Right cardiac atrium (tissue), 5 donors: ENCODE measurements at regions of chr9 and their contacts with region 1.

Region 1: DNA sequence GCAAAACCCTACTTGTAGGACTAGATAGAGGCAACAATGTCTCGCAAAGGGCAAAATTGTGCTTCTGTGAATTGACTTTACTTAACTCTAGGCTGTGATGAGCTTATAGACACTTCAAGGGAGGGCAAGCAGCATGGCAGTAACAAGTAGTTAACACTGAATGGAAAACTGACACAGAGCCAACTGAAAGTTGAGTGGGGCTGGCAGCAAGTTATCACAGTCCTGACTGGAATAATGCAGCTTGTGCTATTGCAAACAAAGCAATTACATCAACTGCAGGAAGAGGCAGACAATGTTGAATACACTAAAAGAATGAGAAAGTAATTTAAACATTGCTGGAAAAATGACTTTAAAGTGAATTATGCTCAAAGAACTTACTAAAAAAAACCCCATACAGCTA is 62.2 kb downstream of the RNF38 start:
- DNase-seq: peak in 1 of 3 donors; percentile 28
- ATAC-seq: peak; percentile 89 to 94
- H3K4me3 ChIP-seq: no peak overlapping the region
- H3K27ac ChIP-seq: no peak overlapping the region
- H3K4me1 ChIP-seq: no peaks in the 10 kb centered on the region
- H3K27me3 ChIP-seq: no peaks in the 10 kb centered on the region

Region 2: DNA sequence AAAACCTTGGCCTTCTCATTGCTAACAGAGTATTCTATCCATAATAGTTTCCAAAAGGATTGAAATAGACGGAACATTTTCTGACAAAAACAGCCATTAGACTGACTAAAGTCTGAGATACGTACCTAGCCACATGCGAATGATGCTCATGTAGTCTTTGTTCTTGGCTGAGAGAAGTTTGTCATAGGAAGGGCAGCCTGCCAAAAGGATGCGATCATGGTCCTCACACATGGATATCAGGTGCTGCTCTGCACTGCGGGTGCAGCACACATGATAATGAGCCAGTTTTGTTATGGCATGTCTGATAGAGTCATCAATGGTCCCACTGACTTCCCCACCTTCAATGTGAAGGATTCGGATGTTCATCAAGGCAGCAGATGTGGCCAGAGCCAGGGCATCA is 92.0 kb before region 1 on chr9:
- intact Hi-C with region 1: loop called in 1 of 4 experiments (anchors 10 kb)
- DNase-seq: no peak
- ATAC-seq: no peak
- H3K4me3 ChIP-seq: no peak overlapping the region
- H3K27ac ChIP-seq: no peak overlapping the region
- H3K4me1 ChIP-seq: no peaks in the 10 kb centered on the region
- H3K27me3 ChIP-seq: no peaks in the 10 kb centered on the region

Region 3: DNA sequence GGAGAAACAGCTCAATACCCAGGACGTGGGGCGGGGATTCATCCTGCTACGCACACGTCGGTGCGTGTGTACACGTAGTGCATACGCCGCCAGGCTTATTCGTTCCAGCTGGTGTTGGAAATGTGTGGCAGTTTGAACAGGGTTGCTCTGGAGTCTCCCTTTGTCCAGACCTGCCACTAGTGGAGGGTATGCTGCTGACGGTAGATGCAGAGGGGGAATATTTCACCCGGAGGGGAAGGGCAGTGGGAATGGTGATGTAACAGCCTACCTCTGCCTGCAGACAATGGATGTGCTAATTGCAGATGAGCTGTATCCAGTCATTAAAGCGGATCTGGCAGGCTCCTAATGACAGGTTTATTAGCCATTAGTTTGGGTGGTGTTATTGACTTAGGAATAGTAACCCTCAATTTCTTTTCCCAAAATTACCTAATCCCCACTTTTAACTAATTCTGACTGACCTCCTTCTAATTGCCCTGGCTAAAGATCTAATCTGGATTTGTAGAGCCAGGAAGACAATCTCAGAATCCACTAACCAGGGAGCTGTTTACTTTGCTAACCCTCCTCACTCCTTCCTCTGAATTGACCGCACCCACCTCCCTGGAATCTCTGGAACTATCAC is 553.6 kb after region 1 on chr9:
- intact Hi-C with region 1: no loop called
- DNase-seq: no peak
- ATAC-seq: no peak
- H3K4me3 ChIP-seq: no peak overlapping the region
- H3K27ac ChIP-seq: no peak overlapping the region
- H3K4me1 ChIP-seq: no peaks in the 10 kb centered on the region
- H3K27me3 ChIP-seq: no peaks in the 10 kb centered on the region